ENCODE measurements at regions of chr1 and their contacts with region 1.

Region 1: GRCh38 chr1:16913833-16914662 is 7.7 kb upstream of the CROCC start:
- DNase-seq: peak; percentile 96
- ATAC-seq: peak; percentile 97
- H3K4me3 ChIP-seq: peak overlapping the region in 4 of 5 experiments; percentile 65 to 83 (median 72)
- H3K4me3 Mint-ChIP-seq: peak overlapping the region; percentile 91
- H3K27ac ChIP-seq: peak overlapping the region; percentile 62 to 71
- H3K27ac Mint-ChIP-seq: peak overlapping the region; percentile 84
- H3K4me1 ChIP-seq: peaks cover 25 to 27% of the 10 kb centered on the region in 2 donors
- H3K4me1 Mint-ChIP-seq: peaks cover 26% of the 10 kb centered on the region
- H3K27me3 ChIP-seq: no peaks in the 10 kb centered on the region
- H3K27me3 Mint-ChIP-seq: no peaks in the 10 kb centered on the region
- CTCF ChIP-seq: no peak

Region 2: GRCh38 chr1:17045634-17046333 is 131.7 kb after region 1 on chr1:
- CTCF ChIA-PET with region 1: no interaction called
- POLR2A ChIA-PET with region 1: no interaction called
- intact Hi-C with region 1: loop called (anchors 2 kb)
- DNase-seq: peak; percentile 53
- ATAC-seq: peak; percentile 75
- H3K4me3 ChIP-seq: peak overlapping the region in 4 of 5 experiments; percentile 5 to 36 (median 30)
- H3K4me3 Mint-ChIP-seq: peak overlapping the region; percentile 83
- H3K27ac ChIP-seq: peak overlapping the region; percentile 26 to 56
- H3K27ac Mint-ChIP-seq: peak overlapping the region; percentile 84
- H3K4me1 ChIP-seq: peaks cover 6 to 11% of the 10 kb centered on the region in 2 donors
- H3K4me1 Mint-ChIP-seq: peaks cover 19% of the 10 kb centered on the region
- H3K27me3 ChIP-seq: no peaks in the 10 kb centered on the region
- H3K27me3 Mint-ChIP-seq: no peaks in the 10 kb centered on the region
- CTCF ChIP-seq: peak; percentile 76

Measured in B cell (primary cell).